Activated naive CD4-positive, alpha-beta T cell treated with anti-CD3 and anti-CD28 coated beads for 36 hours (primary cell): ENCODE measurements at regions of chr6 and their contacts with region 1.

Region 1: DNA sequence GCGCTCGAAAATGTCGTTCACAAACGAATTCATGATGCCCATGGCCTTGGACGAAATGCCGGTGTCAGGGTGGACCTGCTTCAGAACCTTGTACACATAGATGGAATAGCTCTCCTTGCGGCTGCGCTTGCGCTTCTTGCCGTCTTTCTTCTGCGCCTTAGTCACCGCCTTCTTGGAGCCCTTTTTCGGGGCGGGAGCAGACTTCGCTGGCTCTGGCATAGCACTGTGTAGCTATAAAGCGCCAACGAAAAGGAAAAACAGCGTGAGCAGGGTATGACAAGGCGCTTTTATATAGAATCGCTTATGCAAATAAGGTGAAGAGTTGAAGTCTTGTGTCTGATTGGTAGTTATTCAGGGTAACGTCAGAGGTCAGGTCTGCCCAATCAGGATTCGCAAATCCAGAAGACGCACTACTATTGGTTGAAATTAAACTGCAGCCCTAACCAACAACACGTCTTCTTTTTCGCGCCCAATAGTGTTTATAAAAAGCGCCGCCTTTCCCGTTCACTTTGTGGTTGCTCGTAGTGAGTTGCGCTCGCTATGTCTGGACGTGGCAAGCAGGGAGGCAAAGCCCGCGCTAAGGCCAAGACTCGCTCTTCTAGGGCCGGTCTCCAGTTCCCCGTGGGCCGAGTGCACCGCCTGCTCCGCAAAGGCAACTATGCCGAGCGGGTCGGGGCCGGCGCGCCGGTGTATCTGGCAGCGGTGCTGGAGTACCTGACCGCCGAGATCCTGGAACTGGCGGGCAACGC is 114.8 kb upstream of the PRSS16 start:
- DNase-seq: peak; percentile 94
- H3K4me3 Mint-ChIP-seq: no peak overlapping the region
- H3K27ac Mint-ChIP-seq: no peak overlapping the region
- H3K4me1 Mint-ChIP-seq: peaks cover 19% of the 10 kb centered on the region
- H3K27me3 Mint-ChIP-seq: no peaks in the 10 kb centered on the region

Region 2: DNA sequence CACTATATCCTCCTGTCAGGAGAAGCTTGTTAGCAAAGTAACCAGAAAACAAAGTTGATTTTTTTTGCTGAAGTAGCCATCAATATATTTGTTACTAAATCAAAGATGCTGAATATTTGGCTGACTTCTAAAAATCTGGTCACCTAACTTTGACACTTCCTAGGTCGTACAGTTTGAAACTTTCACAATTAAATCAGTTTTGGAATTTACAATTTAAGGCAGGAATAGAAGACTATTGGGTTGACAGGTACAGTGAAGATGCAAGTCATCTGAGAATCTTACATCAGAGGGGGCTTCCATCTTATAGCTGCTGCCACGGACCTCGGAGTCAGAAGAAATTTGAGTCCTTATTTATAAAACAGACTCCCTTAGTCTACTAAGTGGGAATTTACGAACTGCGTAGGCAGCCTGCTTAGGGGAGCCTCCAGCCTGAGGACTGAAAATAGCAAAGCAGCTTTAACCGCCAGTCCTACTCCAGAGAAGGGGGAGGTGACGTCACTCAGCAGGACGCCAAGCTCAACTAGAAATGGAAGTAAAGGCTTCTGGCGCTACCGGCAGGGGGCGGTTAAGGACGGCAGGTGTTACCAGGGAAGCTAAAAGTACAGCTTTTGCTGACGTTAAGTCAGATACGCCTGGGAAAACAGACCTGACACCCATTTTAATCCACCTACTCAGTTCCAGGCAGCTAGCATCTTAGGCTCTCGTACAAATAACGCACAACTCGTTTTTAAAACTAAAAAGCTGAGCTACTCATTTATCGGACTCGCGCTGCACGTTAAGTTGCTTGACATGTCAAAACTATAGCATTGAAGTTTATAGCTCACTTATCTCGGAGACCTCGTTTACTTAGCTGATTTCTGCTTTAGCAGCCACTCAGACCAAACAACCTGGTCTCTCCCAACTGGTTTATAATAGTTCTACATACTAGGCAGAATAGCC is 1106.5 kb before region 1 on chr6:
- CTCF ChIA-PET with region 1: no interaction called
- intact Hi-C with region 1: loop called (anchors 2 kb)
- DNase-seq: peak; percentile 98
- H3K4me3 Mint-ChIP-seq: peak overlapping the region; percentile 87
- H3K27ac Mint-ChIP-seq: peak overlapping the region; percentile 99
- H3K4me1 Mint-ChIP-seq: peaks cover 31% of the 10 kb centered on the region
- H3K27me3 Mint-ChIP-seq: no peaks in the 10 kb centered on the region

Region 3: DNA sequence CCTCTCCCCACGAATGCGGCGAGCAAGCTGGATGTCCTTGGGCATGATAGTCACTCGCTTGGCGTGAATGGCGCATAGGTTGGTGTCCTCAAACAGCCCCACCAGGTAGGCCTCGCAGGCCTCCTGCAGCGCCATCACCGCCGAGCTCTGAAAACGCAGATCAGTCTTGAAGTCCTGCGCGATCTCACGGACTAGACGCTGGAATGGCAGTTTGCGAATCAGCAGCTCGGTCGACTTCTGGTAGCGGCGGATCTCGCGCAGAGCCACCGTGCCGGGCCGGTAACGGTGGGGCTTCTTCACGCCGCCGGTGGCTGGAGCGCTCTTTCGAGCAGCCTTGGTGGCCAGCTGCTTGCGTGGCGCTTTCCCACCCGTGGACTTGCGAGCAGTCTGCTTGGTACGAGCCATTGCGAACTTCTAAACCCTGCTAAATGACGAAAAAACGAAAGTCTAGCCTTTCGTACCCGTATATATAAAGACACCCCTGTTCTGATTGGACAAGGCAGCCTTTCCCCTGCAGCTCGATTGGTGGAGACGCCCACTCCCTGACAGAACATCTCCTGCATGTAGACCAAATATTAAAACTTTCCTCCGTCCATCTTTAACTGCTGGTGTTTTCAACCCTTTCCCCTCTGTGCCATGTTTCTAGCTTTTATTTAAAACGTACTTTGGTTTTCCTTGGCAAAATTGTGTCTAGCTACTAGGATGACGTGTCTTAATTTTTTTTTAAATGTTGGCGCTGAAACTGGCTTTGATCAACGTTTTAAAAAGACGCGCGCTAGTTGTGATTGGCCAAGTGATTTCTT is 935.7 kb before region 1 on chr6:
- CTCF ChIA-PET with region 1: no interaction called
- intact Hi-C with region 1: loop called (anchors 2 kb)
- DNase-seq: peak; percentile 86
- H3K4me3 Mint-ChIP-seq: peak overlapping the region; percentile 96
- H3K27ac Mint-ChIP-seq: peak overlapping the region; percentile 99
- H3K4me1 Mint-ChIP-seq: peaks cover 36% of the 10 kb centered on the region
- H3K27me3 Mint-ChIP-seq: peaks cover 5% of the 10 kb centered on the region

Region 4: DNA sequence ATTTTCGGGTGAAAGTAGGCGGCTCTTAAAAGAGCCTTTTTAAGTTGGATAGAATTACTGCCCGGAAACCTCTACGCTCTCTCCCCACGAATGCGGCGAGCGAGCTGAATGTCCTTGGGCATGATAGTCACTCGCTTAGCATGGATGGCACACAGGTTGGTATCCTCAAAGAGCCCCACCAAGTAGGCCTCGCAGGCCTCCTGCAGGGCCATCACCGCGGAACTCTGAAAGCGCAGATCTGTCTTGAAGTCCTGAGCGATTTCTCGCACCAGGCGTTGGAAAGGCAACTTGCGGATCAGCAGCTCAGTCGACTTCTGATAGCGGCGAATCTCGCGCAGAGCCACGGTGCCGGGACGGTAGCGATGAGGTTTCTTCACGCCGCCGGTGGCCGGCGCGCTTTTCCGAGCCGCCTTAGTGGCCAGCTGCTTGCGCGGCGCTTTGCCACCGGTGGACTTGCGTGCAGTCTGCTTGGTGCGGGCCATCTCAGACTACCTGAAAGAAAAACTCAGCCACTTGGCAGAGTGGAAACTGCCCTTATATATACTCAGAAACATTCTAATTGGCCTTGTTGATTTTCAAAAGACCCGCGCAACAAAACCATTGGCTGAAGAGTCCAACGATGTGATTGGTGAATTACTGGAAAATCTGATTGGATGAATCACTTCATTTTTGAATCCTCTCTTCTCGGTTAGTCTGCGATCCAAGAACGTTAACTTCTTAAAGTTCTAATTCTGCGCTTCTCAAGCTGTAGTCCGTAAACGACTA is 861.6 kb before region 1 on chr6:
- CTCF ChIA-PET with region 1: no interaction called
- intact Hi-C with region 1: loop called (anchors 5 kb)
- DNase-seq: peak; percentile 92
- H3K4me3 Mint-ChIP-seq: no peak overlapping the region
- H3K27ac Mint-ChIP-seq: no peak overlapping the region
- H3K4me1 Mint-ChIP-seq: peaks cover 9% of the 10 kb centered on the region
- H3K27me3 Mint-ChIP-seq: peaks cover 5% of the 10 kb centered on the region

Region 5: DNA sequence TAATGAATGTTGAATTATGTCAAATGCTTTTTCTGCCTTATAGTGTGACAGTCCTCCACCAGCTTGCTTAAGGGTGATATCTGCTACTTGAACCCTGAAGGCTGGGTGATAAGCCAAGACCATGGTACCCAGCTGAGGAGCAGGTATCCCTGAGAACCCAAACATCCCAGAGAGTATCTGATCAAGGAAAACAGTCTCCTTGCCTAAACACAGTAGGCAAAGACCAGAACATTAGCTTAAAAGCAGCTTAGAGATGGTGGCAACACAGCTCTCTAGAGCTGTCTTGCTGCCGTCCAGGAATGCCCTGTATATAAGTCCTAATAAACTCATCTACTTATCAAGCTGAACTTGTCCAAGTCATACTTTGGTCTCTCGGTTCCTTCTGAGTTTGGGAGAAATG is 12.9 kb before region 1 on chr6:
- CTCF ChIA-PET with region 1: no interaction called
- intact Hi-C with region 1: no loop called
- DNase-seq: no peak
- H3K4me3 Mint-ChIP-seq: no peak overlapping the region
- H3K27ac Mint-ChIP-seq: no peak overlapping the region
- H3K4me1 Mint-ChIP-seq: peaks cover 7% of the 10 kb centered on the region
- H3K27me3 Mint-ChIP-seq: no peaks in the 10 kb centered on the region

Region 6: DNA sequence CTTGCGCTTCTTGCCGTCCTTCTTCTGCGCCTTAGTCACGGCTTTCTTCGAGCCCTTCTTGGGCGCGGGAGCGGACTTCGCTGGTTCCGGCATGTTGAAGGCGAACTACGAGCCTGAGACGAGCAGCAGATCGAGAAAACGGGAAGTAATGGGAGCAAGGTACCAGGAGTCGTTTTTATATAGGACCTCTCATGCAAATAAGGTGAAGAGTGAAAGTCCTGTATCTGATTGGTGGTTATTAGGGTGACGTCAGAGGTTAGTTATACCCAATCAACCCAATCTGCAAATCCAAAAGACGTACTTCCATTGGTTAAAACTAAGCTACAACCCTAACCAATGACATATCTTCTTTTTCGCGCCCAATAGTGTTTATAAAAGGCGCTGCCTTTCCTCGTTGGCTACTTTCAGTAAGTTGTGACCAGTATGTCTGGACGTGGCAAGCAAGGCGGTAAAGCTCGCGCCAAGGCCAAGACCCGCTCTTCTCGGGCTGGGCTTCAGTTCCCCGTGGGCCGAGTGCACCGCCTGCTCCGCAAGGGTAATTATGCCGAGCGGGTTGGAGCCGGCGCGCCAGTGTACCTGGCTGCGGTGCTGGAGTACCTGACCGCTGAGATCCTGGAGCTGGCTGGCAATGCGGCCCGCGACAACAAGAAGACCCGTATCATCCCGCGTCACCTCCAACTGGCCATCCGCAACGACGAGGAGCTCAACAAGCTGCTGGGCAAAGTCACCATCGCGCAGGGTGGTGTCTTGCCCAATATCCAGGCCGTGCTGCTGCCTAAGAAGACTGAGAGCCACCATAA is 14.2 kb after region 1 on chr6:
- CTCF ChIA-PET with region 1: interaction called, 6 read pairs
- intact Hi-C with region 1: loop called (anchors 1 kb)
- DNase-seq: peak; percentile 87
- H3K4me3 Mint-ChIP-seq: no peak overlapping the region
- H3K27ac Mint-ChIP-seq: no peak overlapping the region
- H3K4me1 Mint-ChIP-seq: peaks cover 11% of the 10 kb centered on the region
- H3K27me3 Mint-ChIP-seq: no peaks in the 10 kb centered on the region

Region 7: GRCh38 chr6:27327023-27327738 is 194.5 kb after region 1 on chr6:
- CTCF ChIA-PET with region 1: no interaction called
- intact Hi-C with region 1: no loop called
- DNase-seq: no peak
- H3K4me3 Mint-ChIP-seq: no peak overlapping the region
- H3K27ac Mint-ChIP-seq: no peak overlapping the region
- H3K4me1 Mint-ChIP-seq: no peaks in the 10 kb centered on the region
- H3K27me3 Mint-ChIP-seq: peaks cover 29% of the 10 kb centered on the region

Region 8: GRCh38 chr6:27479319-27480182 is 346.8 kb after region 1 on chr6:
- CTCF ChIA-PET with region 1: no interaction called
- intact Hi-C with region 1: loop called (anchors 1 kb)
- DNase-seq: peak; percentile 90
- H3K4me3 Mint-ChIP-seq: no peak overlapping the region
- H3K27ac Mint-ChIP-seq: no peak overlapping the region
- H3K4me1 Mint-ChIP-seq: peaks cover 6% of the 10 kb centered on the region
- H3K27me3 Mint-ChIP-seq: no peaks in the 10 kb centered on the region

Region 9: GRCh38 chr6:27838058-27838944 is 705.6 kb after region 1 on chr6:
- CTCF ChIA-PET with region 1: no interaction called
- intact Hi-C with region 1: no loop called
- DNase-seq: peak; percentile 87
- H3K4me3 Mint-ChIP-seq: no peak overlapping the region
- H3K27ac Mint-ChIP-seq: no peak overlapping the region
- H3K4me1 Mint-ChIP-seq: peaks cover 26% of the 10 kb centered on the region
- H3K27me3 Mint-ChIP-seq: peaks cover 7% of the 10 kb centered on the region

Region 10: GRCh38 chr6:27864906-27865849 is 732.5 kb after region 1 on chr6:
- CTCF ChIA-PET with region 1: no interaction called
- intact Hi-C with region 1: loop called (anchors 1 kb)
- DNase-seq: peak; percentile 84
- H3K4me3 Mint-ChIP-seq: peak overlapping the region; percentile 97
- H3K27ac Mint-ChIP-seq: peak overlapping the region; percentile 96
- H3K4me1 Mint-ChIP-seq: peaks cover 26% of the 10 kb centered on the region
- H3K27me3 Mint-ChIP-seq: peaks cover 8% of the 10 kb centered on the region